Activated naive CD4-positive, alpha-beta T cell treated with anti-CD3 and anti-CD28 coated beads for 36 hours (primary cell): ENCODE measurements at regions of chr2 and their contacts with region 1.

Region 1: DNA sequence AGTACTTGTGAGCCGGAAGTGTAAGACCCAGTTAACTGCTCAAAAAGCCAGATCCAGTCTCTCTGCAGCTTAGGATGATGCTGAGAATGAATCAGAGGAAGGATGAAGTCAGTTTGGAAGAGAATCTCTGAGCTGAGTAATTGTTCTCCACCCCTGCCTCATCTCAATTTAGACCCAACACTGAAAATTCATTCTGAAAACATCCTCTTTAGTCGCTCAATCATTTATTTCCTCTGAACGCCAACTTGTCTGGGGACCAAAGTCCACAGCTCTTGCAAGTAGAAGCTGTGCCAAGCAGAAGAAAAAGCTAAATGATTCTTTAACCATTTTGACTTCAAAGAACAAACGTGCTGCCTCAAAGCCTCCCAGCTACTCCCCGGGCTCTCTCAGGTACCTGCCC is 177.1 kb upstream of the KLHL29 start:
- DNase-seq: no peak
- H3K4me3 Mint-ChIP-seq: no peak overlapping the region
- H3K27ac Mint-ChIP-seq: no peak overlapping the region
- H3K4me1 Mint-ChIP-seq: no peaks in the 10 kb centered on the region
- H3K27me3 Mint-ChIP-seq: peaks cover 23% of the 10 kb centered on the region

Region 2: GRCh38 chr2:22912398-22912797 is 295.5 kb before region 1 on chr2:
- CTCF ChIA-PET with region 1: no interaction called
- intact Hi-C with region 1: no loop called
- DNase-seq: no peak
- H3K4me3 Mint-ChIP-seq: no peak overlapping the region
- H3K27ac Mint-ChIP-seq: no peak overlapping the region
- H3K4me1 Mint-ChIP-seq: no peaks in the 10 kb centered on the region
- H3K27me3 Mint-ChIP-seq: peaks cover 6% of the 10 kb centered on the region

Region 3: DNA sequence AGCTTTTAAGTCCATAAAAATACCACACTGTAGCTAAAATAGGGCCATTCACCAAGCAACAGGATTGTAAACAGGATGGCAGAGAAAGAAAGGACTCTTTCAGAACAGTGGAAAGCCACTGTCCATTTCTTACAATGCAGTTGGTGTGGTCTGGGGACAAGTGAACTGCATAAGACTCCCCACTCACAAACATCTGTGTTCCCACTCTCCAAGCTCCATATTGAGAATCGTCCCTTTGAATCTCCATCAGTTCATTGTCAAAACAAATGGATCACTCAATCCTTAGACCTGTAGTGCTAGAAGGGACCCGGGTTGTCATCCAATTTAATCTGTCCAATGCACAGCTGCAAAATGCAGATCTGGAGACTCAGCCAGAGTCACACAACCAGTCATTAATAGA is 170.3 kb before region 1 on chr2:
- CTCF ChIA-PET with region 1: no interaction called
- intact Hi-C with region 1: no loop called
- DNase-seq: no peak
- H3K4me3 Mint-ChIP-seq: no peak overlapping the region
- H3K27ac Mint-ChIP-seq: no peak overlapping the region
- H3K4me1 Mint-ChIP-seq: no peaks in the 10 kb centered on the region
- H3K27me3 Mint-ChIP-seq: no peaks in the 10 kb centered on the region

Region 4: GRCh38 chr2:23452853-23453420 is 245.1 kb after region 1 on chr2:
- CTCF ChIA-PET with region 1: no interaction called
- intact Hi-C with region 1: loop called (anchors 10 kb)
- DNase-seq: peak; percentile 69
- H3K4me3 Mint-ChIP-seq: peak overlapping the region; percentile 23
- H3K27ac Mint-ChIP-seq: no peak overlapping the region
- H3K4me1 Mint-ChIP-seq: peaks cover 26% of the 10 kb centered on the region
- H3K27me3 Mint-ChIP-seq: peaks cover 5% of the 10 kb centered on the region

Region 5: GRCh38 chr2:24084386-24085361 is 876.8 kb after region 1 on chr2 and contains the start of gene TP53I3:
- CTCF ChIA-PET with region 1: no interaction called
- intact Hi-C with region 1: no loop called
- DNase-seq: peak; percentile 80
- H3K4me3 Mint-ChIP-seq: peak within 1 kb of the TSS; percentile 85
- H3K27ac Mint-ChIP-seq: peak within 1 kb of the TSS; percentile 27
- H3K4me1 Mint-ChIP-seq: peaks cover 8% of the 10 kb centered on the region
- H3K27me3 Mint-ChIP-seq: no peaks in the 10 kb centered on the region
- total RNA-seq, gene TP53I3: 0.60 to 0.81 TPM